ENCODE measurements at regions of chr1 and their contacts with region 1.

Region 1: DNA sequence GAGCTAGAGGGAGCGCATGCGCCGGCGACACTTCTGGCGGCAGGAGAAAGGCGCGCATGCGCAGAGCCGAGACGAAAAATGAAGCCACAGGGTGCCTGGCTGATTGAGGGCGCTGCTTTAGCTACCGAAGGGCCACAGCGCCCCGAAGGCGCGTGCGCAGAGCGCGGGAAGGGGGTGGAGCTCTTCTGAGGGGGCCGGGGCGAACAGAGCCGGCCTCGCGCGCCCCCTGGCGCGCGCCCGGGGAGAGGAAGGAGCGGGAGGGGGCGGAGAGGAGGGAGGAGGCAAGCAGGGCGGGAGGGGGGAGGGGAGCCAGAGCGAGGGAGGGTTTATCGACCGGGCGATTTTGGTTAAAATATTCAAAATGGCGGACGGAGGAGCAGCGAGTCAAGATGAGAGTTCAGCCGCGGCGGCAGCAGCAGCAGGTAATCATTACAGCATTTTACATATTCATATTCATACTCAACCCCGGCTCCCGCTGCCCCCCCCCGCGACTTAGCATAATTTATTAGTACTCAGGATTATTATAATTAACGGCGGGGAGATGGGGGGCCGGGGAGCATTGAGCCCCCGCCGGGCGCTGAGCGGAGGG is at the start of gene POU2F1:
- DNase-seq: peak; percentile 99
- H3K4me3 Mint-ChIP-seq: peak within 1 kb of the TSS; percentile 98
- H3K27ac Mint-ChIP-seq: peak within 1 kb of the TSS; percentile 93
- H3K4me1 Mint-ChIP-seq: peaks cover 40% of the 10 kb centered on the region
- H3K27me3 Mint-ChIP-seq: no peaks in the 10 kb centered on the region
- total RNA-seq, gene POU2F1: 17.4 to 20.4 TPM

Region 2: DNA sequence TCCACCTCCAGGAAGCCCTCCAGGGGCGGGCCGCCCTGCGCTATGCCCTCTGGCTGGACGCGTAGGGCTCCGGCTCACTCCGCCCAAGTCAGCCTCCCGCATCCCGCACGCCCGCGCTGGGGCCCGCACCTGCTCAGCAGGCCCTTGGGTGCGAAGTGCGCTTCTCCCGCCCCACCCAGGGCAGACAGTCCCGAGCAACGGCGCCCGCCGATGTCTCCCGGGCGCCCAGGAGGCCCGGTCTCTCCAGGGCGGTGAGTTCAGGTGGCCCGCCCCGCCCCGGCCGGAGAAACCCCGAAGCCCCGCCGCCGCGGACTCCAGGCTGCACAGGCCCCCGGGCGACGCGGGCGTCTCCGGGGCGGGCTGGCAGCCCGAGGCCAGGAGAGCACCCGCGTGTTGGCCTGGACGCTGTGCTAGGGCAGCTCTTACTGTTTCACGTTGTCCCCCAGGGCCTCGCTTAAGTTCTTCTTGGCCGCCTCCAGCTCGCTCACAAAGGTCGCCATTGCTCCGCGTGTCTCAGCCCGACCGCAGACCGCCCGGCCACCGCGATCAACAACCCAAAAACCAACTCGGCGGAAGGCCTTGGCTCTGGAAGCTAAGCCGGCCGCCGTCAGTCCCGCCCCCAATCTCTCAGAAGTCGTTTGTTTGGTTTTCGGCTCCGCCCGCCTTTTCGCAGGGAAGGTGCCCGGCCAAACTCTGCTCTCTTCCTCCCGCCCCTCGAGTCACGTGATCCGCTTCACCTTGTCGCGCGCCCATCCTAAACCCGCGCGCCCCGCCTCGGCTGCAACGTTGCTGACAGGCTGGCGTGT is 344.7 kb before region 1 on chr1 and contains the start of gene TADA1:
- CTCF ChIA-PET with region 1: interaction called, 15 read pairs
- POLR2A ChIA-PET with region 1: interaction called, 18 read pairs
- DNase-seq: peak; percentile 99
- H3K4me3 Mint-ChIP-seq: peak within 1 kb of the TSS; percentile 92
- H3K27ac Mint-ChIP-seq: peak within 1 kb of the TSS; percentile 97
- H3K4me1 Mint-ChIP-seq: peaks cover 52% of the 10 kb centered on the region
- H3K27me3 Mint-ChIP-seq: peaks cover 3% of the 10 kb centered on the region
- total RNA-seq, gene TADA1: 17.0 to 17.9 TPM

Region 3: GRCh38 chr1:167066333-167067122 is 154.1 kb before region 1 on chr1:
- CTCF ChIA-PET with region 1: interaction called, 25 read pairs
- POLR2A ChIA-PET with region 1: interaction called, 8 read pairs
- DNase-seq: peak; percentile 80
- H3K4me3 Mint-ChIP-seq: no peak overlapping the region
- H3K27ac Mint-ChIP-seq: no peak overlapping the region
- H3K4me1 Mint-ChIP-seq: peaks cover 1% of the 10 kb centered on the region
- H3K27me3 Mint-ChIP-seq: peaks cover 2% of the 10 kb centered on the region

Region 4: DNA sequence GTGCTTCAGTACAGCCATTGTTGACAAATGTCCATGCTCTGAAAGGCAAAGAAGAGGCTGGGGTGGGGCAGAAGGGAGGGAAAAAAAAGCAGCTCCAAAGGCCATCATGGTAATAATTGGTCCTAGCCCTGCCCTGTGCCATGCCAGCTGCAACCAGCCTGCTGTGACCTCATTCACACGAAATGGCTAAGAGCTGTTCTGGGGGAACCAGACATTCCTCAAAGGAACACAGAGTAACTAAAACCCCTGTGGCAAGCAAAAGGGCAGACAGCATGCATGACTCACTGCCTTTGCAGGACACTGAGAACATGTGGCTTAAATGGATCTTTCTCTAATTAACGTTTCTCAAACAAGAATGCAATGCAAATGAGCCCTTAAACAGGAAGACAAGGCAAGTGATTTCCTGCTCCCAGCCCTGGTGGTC is 84.4 kb before region 1 on chr1:
- CTCF ChIA-PET with region 1: no interaction called
- POLR2A ChIA-PET with region 1: no interaction called
- DNase-seq: no peak
- H3K4me3 Mint-ChIP-seq: no peak overlapping the region
- H3K27ac Mint-ChIP-seq: no peak overlapping the region
- H3K4me1 Mint-ChIP-seq: no peaks in the 10 kb centered on the region
- H3K27me3 Mint-ChIP-seq: peaks cover 44% of the 10 kb centered on the region

Region 5: GRCh38 chr1:167288390-167289074 is 67.9 kb after region 1 on chr1:
- CTCF ChIA-PET with region 1: no interaction called
- POLR2A ChIA-PET with region 1: no interaction called
- DNase-seq: no peak
- H3K4me3 Mint-ChIP-seq: no peak overlapping the region
- H3K27ac Mint-ChIP-seq: no peak overlapping the region
- H3K4me1 Mint-ChIP-seq: no peaks in the 10 kb centered on the region
- H3K27me3 Mint-ChIP-seq: no peaks in the 10 kb centered on the region

Region 6: GRCh38 chr1:167447521-167448136 is 227.0 kb after region 1 on chr1:
- CTCF ChIA-PET with region 1: interaction called, 13 read pairs
- POLR2A ChIA-PET with region 1: interaction called, 20 read pairs
- DNase-seq: peak; percentile 84
- H3K4me3 Mint-ChIP-seq: peak overlapping the region; percentile 28
- H3K27ac Mint-ChIP-seq: peak overlapping the region; percentile 97
- H3K4me1 Mint-ChIP-seq: peaks cover 85% of the 10 kb centered on the region
- H3K27me3 Mint-ChIP-seq: no peaks in the 10 kb centered on the region

Region 7: DNA sequence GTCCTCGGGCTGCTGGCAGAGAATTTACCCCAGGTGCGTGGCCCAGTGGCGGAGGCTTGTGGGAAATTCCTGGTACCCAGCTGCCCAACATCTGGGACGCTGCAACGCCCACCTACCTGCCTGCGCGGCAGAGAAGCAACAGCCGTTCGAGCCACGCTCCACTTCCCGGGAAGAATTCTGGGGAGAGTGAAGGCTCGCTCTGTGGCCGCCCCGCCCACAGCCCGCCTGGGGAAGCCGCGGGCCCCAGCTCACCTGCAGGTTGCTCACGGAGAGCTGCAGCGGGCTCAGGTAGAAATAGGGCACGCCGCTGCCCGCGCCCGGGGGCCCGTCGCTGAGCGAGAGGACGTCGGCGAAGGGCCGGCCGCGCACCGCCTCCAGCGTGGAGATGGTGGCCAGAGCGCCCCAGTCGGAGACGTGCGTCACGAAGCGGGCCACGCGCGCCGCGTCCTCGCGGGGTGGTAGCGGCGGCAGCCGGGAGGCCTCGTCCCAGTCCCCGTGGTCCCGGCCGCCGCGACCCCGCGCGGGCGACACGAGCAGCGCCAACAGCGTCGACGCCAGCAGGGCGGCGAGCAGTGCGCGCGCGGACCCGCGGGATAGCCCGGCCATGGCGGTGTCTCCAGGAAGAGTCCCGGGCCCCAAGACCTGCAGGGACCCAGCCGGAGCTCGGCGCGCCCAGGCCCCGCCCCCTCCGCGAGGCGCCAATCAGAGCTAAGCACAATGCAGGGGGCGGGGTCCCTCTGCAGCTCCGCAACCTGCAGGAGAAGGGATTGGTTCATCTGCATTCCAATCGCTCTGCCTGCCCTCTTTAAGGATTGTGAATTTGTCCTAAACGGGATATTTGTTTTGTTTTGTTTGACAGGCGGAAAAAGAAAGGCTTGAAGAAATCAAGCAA is 332.8 kb after region 1 on chr1 and contains the start of gene CREG1:
- CTCF ChIA-PET with region 1: interaction called, 27 read pairs
- POLR2A ChIA-PET with region 1: interaction called, 3 read pairs
- DNase-seq: peak; percentile 92
- H3K4me3 Mint-ChIP-seq: peak within 1 kb of the TSS; percentile 78
- H3K27ac Mint-ChIP-seq: peak within 1 kb of the TSS; percentile 33
- H3K4me1 Mint-ChIP-seq: peaks cover 45% of the 10 kb centered on the region
- H3K27me3 Mint-ChIP-seq: peaks cover 6% of the 10 kb centered on the region
- total RNA-seq, gene CREG1: 19.5 TPM

Region 8: GRCh38 chr1:167936068-167936929 is 715.7 kb after region 1 on chr1 and contains the start of gene DCAF6:
- CTCF ChIA-PET with region 1: interaction called, 6 read pairs
- POLR2A ChIA-PET with region 1: interaction called, 26 read pairs
- DNase-seq: peak; percentile 97
- H3K4me3 Mint-ChIP-seq: peak within 1 kb of the TSS; percentile 88
- H3K27ac Mint-ChIP-seq: peak within 1 kb of the TSS; percentile 93
- H3K4me1 Mint-ChIP-seq: peaks cover 34% of the 10 kb centered on the region
- H3K27me3 Mint-ChIP-seq: no peaks in the 10 kb centered on the region
- total RNA-seq, gene DCAF6: 26.4 to 27.1 TPM

Measured in activated CD4-positive, alpha-beta memory T cell treated with anti-CD3 and anti-CD28 coated beads, Interleukin-2, amount 10 ng/mL, durations not matched to agents 7 days and 5 days (primary cell).